ENCODE measurements at regions of chr5 and their contacts with region 1.

Region 1: DNA sequence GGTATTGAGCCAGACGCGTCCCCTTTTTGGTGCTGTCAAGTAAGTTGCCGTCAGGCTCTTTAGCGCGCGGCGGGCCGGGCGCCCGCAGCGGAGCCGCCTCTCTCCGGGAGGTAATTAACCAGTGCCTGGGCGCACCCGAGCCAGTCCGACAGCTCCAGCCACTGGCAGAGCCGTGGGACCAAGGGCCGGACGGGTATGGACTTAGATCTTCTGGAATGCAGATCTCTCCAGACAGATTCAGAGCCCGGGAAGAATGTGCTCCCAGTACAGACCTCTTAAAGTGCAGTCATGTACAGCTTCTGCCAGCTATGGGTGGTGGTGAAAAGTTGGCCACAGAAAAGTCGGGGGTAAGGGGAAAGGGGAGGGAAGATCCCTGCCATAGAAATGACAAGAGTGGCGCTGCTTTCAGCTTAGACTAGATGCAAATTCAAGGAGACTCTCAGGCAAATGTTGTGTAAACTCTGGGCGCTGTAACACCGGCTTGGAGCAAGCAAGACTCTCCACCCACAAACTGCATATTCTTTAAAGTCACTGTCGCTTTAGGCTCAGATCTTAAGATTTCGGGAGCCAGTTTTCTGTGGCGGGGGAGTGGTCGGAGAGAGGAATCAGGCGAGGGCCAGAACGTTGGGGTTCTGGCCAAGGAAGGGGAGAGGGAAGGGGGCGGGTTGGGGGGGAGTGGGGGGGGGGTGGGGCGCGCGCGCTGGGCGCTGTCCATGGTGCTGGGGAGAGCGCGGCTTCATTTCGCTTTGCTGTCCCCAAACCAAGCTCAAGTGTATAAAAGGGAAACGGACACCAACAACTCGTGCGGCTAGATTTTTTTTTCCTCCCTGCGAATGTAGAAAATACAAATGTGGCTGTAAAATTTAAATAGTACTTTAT is 29.2 kb downstream of the NR2F1 start:
- DNase-seq: peak; percentile 36
- H3K4me3 ChIP-seq: no peak overlapping the region
- H3K27ac ChIP-seq: no peak overlapping the region
- H3K4me1 ChIP-seq: peaks cover 11% of the 10 kb centered on the region
- H3K27me3 ChIP-seq: peaks cover 57% of the 10 kb centered on the region

Region 2: DNA sequence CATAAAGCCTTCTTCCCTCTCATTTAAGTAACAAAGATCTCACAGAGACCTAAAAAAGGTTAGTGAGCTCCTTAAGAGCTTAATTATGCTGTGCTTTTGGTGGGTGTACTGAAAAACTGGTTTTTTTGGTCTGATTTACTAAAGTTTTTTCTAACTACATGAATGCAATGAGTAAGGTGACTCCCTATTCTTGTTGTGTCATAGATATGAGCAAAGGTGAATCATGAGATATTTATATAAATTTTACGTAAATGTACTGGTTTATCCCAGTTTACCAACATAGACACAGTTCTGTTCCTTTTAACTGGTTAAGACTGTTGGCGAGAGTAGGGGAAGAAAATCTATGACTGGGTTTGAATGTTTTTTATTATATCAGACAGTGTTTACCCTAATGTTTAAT is 281.7 kb before region 1 on chr5:
- in situ Hi-C with region 1: no loop called
- DNase-seq: peak; percentile 78
- H3K4me3 ChIP-seq: no peak overlapping the region
- H3K27ac ChIP-seq: peak overlapping the region; percentile 36
- H3K4me1 ChIP-seq: peaks cover 13% of the 10 kb centered on the region
- H3K27me3 ChIP-seq: no peaks in the 10 kb centered on the region

Region 3: GRCh38 chr5:93794954-93795353 is 182.7 kb after region 1 on chr5:
- in situ Hi-C with region 1: loop called (anchors 5 kb)
- DNase-seq: no peak
- H3K4me3 ChIP-seq: no peak overlapping the region
- H3K27ac ChIP-seq: no peak overlapping the region
- H3K4me1 ChIP-seq: peaks cover 8% of the 10 kb centered on the region
- H3K27me3 ChIP-seq: no peaks in the 10 kb centered on the region

Region 4: GRCh38 chr5:94140300-94140699 is 528.1 kb after region 1 on chr5:
- in situ Hi-C with region 1: no loop called
- DNase-seq: no peak
- H3K4me3 ChIP-seq: no peak overlapping the region
- H3K27ac ChIP-seq: no peak overlapping the region
- H3K4me1 ChIP-seq: no peaks in the 10 kb centered on the region
- H3K27me3 ChIP-seq: 0 out of 2 replicates have a peak, but pooled peaks cover 7% of the 10 kb centered on the region